ENCODE measurements at regions of chr11 and their contacts with region 1.

Region 1: DNA sequence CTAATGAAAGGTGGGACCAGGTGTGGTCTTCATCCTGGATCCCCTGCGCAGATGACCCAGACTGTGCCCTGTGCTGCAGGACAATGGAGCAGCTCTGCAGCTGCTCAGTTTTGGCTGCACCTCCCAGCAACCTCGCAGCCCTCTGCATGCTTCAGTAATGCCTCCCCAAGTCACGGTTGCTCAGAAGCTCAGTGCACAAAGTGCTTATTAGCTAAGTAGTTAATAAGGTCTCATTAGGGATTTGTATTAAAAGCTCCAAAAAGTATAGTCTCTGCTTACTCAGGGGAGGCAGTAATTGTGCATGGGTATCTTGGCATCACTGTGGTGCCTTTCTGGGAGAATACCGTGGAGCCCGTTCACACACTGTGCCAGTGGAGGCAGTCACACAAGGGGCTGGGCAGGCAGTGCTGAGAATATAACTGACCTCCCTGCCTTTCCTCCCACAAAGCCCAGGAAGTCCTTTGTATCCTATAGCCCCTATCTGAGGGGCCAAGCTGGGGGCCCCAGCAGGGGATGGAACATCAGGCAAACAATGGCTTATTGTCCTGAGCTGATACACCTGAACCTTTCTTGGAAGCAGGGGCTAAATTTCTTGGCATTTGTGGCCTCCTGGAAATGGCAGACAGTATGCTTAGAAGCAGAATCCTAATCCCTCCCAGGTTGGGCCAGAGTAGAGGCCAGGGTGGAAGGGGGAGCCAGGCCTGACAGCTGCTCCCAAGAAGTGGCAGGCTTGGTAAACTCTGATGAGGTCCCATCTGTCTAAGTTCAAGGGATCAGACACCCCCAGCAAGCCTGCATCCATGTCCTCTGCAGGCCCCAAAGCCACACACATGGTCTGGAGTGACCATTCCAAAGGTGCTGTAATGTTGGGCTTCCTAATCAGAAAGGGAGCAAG is 125.5 kb upstream of the PARVA start:
- DNase-seq: no peak
- H3K4me3 ChIP-seq: no peak overlapping the region
- H3K27ac ChIP-seq: peak overlapping the region; percentile 11
- H3K27me3 ChIP-seq: no peaks in the 10 kb centered on the region
- CTCF ChIP-seq: no peak

Region 2: DNA sequence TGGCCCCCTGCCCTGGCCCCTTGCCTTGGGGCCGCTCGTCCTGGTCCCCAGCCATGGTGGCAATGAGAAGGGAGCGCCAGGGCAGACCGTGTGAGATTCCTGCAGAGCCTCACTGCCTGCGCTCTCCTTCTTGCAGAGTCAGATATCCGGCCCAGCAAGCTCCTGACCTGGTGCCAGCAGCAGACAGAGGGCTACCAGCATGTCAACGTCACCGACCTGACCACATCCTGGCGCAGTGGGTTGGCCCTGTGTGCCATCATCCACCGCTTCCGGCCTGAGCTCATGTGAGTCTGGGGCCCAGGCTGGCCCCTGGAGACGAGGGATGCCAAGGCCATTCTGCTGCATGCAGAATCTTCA is 27.4 kb before region 1 on chr11:
- CTCF ChIA-PET with region 1: no interaction called
- POLR2A ChIA-PET with region 1: interaction called, 10 read pairs
- DNase-seq: peak; percentile 88
- H3K4me3 ChIP-seq: no peak overlapping the region
- H3K27ac ChIP-seq: peak overlapping the region; percentile 94
- H3K27me3 ChIP-seq: no peaks in the 10 kb centered on the region
- CTCF ChIP-seq: no peak